Esophagus muscularis mucosa (tissue), 4 donors: ENCODE measurements at regions of chr22 and their contacts with region 1.

Region 1: GRCh38 chr22:23829845-23830372 is 8.9 kb downstream of the DERL3 start:
- DNase-seq: no peak
- H3K4me3 ChIP-seq: no peak overlapping the region
- H3K27ac ChIP-seq: no peak overlapping the region
- H3K4me1 ChIP-seq: peaks cover 0 to 48% (median 3%) of the 10 kb centered on the region in 4 donors
- H3K27me3 ChIP-seq: no peaks in the 10 kb centered on the region
- CTCF ChIP-seq: no peak
- EP300 ChIP-seq: no peak
- POLR2A ChIP-seq: no peak

Region 2: GRCh38 chr22:23796461-23796860 is 33.4 kb before region 1 on chr22:
- intact Hi-C with region 1: loop called (anchors 5 kb)
- DNase-seq: no peak
- H3K4me3 ChIP-seq: no peak overlapping the region
- H3K27ac ChIP-seq: no peak overlapping the region
- H3K4me1 ChIP-seq: peaks cover under 1 to 12% (median 5%) of the 10 kb centered on the region in 4 donors
- H3K27me3 ChIP-seq: no peaks in the 10 kb centered on the region
- CTCF ChIP-seq: no peak
- EP300 ChIP-seq: no peak
- POLR2A ChIP-seq: no peak